ENCODE measurements at regions of chr2 and their contacts with region 1.

Region 1: DNA sequence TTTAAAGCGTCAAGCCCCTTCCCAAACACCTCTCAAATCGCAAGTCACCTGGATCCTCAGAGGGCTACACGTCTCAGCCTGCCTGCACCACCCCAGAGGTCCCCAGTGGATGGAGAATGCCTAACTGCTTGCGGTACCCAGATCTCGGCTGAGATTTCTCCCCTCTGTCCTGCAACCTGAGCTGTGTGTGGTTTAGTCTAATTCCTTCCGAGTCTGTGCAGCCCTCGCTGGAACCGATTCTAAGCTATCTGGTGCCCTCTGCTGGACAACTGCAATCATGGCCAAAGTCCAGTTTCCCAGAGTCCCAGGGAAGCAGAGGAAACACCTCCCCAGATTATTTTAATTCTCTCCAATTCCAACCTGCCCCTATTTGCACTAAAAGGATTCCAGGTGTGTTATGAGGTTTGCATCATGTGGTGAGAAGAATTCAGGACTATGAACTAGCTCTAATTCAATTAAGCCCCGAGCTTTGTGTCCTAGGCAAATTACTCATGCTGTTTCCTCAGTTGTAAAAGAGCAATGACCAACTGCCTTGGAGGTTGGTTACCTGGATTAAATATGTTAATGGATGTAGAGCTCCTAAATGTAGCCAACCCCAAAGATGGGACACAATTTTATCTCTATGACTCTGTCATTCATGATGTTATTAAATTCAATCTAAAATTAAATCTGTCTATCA is 276.1 kb upstream of the NCKAP5 start:
- DNase-seq: peak; percentile 71
- ATAC-seq: peak; percentile 80
- H3K4me3 Mint-ChIP-seq: no peak overlapping the region
- H3K27ac Mint-ChIP-seq: no peak overlapping the region
- H3K4me1 Mint-ChIP-seq: no peaks in the 10 kb centered on the region
- H3K27me3 Mint-ChIP-seq: peaks cover 2% of the 10 kb centered on the region

Region 2: GRCh38 chr2:132267105-132267497 is 1577.3 kb before region 1 on chr2:
- CTCF ChIA-PET with region 1: no interaction called
- POLR2A ChIA-PET with region 1: no interaction called
- intact Hi-C with region 1: loop called in 1 of 2 experiments (anchors 2 kb)
- DNase-seq: no peak
- ATAC-seq: no peak
- H3K4me3 Mint-ChIP-seq: no peak overlapping the region
- H3K27ac Mint-ChIP-seq: no peak overlapping the region
- H3K4me1 Mint-ChIP-seq: no peaks in the 10 kb centered on the region
- H3K27me3 Mint-ChIP-seq: no peaks in the 10 kb centered on the region

Region 3: DNA sequence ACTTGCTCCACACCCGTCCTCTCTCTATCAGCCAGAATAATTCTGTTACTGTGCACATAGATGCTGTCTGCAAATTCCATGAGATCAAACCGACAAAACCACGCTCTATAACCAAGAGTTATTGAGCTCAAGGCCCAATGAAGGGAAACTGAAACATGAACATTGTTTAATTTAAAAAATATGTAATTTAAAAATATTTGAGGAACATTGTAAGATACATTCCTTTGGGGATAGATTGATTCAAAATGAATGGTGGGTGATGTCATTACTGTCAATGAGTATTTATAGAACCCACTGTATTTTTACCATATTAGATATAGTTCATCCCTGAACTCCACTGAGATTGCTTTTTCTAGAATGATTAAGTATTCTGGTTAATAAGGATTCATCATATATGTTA is 326.5 kb before region 1 on chr2:
- CTCF ChIA-PET with region 1: interaction called, 3 read pairs
- POLR2A ChIA-PET with region 1: no interaction called
- intact Hi-C with region 1: loop called (anchors 1 to 10 kb)
- DNase-seq: no peak
- ATAC-seq: no peak
- H3K4me3 Mint-ChIP-seq: no peak overlapping the region
- H3K27ac Mint-ChIP-seq: no peak overlapping the region
- H3K4me1 Mint-ChIP-seq: no peaks in the 10 kb centered on the region
- H3K27me3 Mint-ChIP-seq: no peaks in the 10 kb centered on the region

Region 4: DNA sequence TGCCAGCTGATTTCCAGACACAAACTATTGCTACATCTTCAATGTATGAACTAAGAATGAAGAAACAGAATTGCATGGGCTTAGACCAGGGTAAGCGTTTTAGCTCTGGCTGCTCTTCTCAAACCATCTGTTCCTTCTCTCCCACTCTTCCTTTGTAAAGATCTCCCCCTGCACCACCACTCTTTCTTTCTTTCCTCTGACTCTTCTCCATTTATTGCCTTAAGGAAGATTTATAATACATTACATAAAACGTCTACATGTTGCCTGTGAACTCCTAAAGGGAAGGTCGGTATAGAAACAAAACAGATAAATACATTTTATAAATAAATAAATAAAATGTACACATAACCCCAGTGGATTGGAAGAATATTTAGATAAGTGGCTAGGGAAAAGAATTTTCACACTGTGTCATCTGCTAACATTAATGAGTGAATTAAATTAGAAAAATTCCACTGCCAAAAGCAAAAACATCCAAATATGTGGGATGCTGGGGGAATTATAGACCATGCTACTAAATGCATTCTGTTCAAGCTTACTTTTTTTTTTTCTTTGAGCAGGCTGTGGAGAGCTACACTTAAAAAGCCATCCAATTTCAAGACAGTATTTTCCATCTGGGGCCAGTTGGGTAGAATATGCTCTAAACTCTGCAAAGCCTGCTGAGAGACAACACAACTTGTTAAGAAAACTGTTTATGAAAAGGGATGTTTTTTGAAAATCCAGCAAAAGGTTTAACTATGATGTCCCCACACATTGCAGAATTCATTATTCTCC is 317.6 kb before region 1 on chr2:
- CTCF ChIA-PET with region 1: no interaction called
- POLR2A ChIA-PET with region 1: no interaction called
- intact Hi-C with region 1: loop called in 1 of 2 experiments (anchors 10 kb)
- DNase-seq: no peak
- ATAC-seq: no peak
- H3K4me3 Mint-ChIP-seq: no peak overlapping the region
- H3K27ac Mint-ChIP-seq: no peak overlapping the region
- H3K4me1 Mint-ChIP-seq: no peaks in the 10 kb centered on the region
- H3K27me3 Mint-ChIP-seq: peaks cover 2% of the 10 kb centered on the region

Region 5: GRCh38 chr2:134137182-134137611 is 292.8 kb after region 1 on chr2:
- CTCF ChIA-PET with region 1: no interaction called
- POLR2A ChIA-PET with region 1: no interaction called
- intact Hi-C with region 1: no loop called
- DNase-seq: peak; percentile 41
- ATAC-seq: peak; percentile 83
- H3K4me3 Mint-ChIP-seq: peak overlapping the region; percentile 11
- H3K27ac Mint-ChIP-seq: peak overlapping the region; percentile 79
- H3K4me1 Mint-ChIP-seq: peaks cover 87% of the 10 kb centered on the region
- H3K27me3 Mint-ChIP-seq: no peaks in the 10 kb centered on the region